A673 (cell line): ENCODE measurements at regions of chr10 and their contacts with region 1.

Region 1: GRCh38 chr10:73096449-73097304 is at the start of gene P4HA1:
- DNase-seq: peak; percentile 98
- H3K4me3 ChIP-seq: peak within 1 kb of the TSS; percentile 91
- H3K27ac ChIP-seq: peak within 1 kb of the TSS; percentile 95
- H3K4me1 ChIP-seq: peaks cover 10% of the 10 kb centered on the region
- H3K27me3 ChIP-seq: no peaks in the 10 kb centered on the region
- CTCF ChIP-seq: peak; percentile 65
- total RNA-seq, gene P4HA1: 31.6 and 36.5 TPM in 2 replicates

Region 2: GRCh38 chr10:72812753-72813430 is 283.8 kb before region 1 on chr10:
- CTCF ChIA-PET with region 1: no interaction called
- POLR2A ChIA-PET with region 1: interaction called, 13 read pairs
- intact Hi-C with region 1: no loop called
- DNase-seq: no peak
- H3K4me3 ChIP-seq: no peak overlapping the region
- H3K27ac ChIP-seq: no peak overlapping the region
- H3K4me1 ChIP-seq: no peaks in the 10 kb centered on the region
- H3K27me3 ChIP-seq: no peaks in the 10 kb centered on the region
- CTCF ChIP-seq: no peak

Region 3: GRCh38 chr10:73310475-73310874 is 213.8 kb after region 1 on chr10:
- CTCF ChIA-PET with region 1: no interaction called
- POLR2A ChIA-PET with region 1: no interaction called
- intact Hi-C with region 1: no loop called
- DNase-seq: no peak
- H3K4me3 ChIP-seq: no peak overlapping the region
- H3K27ac ChIP-seq: no peak overlapping the region
- H3K4me1 ChIP-seq: no peaks in the 10 kb centered on the region
- H3K27me3 ChIP-seq: no peaks in the 10 kb centered on the region
- CTCF ChIP-seq: no peak